Ovary (tissue), 10 donors: ENCODE measurements at regions of chr13 and their contacts with region 1.

Region 1: GRCh38 chr13:26985285-26985878 is 186.2 kb downstream of the USP12 start:
- DNase-seq: peak; percentile 41 to 82 (median 55)
- H3K4me3 ChIP-seq: no peak overlapping the region
- H3K27ac ChIP-seq: no peak overlapping the region
- H3K4me1 ChIP-seq: peaks cover 9% of the 10 kb centered on the region
- H3K27me3 ChIP-seq: no peaks in the 10 kb centered on the region
- CTCF ChIP-seq: peak; percentile 57 to 85 (median 71)
- EP300 ChIP-seq: no peak
- POLR2A ChIP-seq: no peak

Region 2: DNA sequence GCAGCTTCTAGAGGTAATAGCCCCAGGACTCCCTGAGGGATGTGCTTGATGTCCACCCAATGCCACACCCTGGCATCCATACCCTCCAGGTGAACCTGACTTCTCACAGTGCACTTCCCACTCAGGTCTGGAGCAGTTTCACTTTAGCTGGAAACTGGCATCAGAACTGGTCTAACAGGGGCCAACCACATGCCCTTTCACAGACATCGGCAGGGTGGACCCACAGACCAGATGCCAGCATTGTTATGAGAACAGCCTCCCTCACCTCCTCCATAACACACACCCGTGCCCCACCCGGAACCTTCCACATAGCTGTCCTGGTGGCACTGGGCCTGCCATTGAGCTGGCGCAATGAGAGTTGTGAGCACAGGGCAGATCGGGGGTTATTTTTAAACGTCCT is 147.4 kb before region 1 on chr13:
- intact Hi-C with region 1: no loop called
- DNase-seq: no peak
- H3K4me3 ChIP-seq: no peak overlapping the region
- H3K27ac ChIP-seq: no peak overlapping the region
- H3K4me1 ChIP-seq: no peaks in the 10 kb centered on the region
- H3K27me3 ChIP-seq: no peaks in the 10 kb centered on the region
- CTCF ChIP-seq: no peak
- EP300 ChIP-seq: no peak
- POLR2A ChIP-seq: no peak

Region 3: DNA sequence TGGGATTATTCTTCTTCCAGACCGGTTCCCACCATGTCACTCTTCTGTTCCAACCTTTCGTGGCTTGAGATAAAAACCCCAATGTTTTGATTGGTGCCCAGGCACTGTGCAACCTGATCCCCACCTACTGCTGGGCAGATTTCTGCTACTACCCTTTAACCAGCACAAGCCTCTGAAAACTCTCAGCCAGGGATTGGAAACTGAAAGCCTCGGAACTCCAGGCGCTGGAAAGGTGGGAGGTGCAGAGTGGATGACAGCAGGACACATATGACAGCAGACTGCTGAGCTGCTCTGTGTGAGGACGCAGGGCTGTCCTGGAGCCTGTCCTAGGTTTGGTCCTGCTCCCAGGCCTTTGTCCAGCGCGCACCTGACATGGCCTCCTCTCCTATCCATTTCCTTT is 370.5 kb after region 1 on chr13:
- intact Hi-C with region 1: loop called (anchors 2 to 5 kb)
- DNase-seq: no peak
- H3K4me3 ChIP-seq: no peak overlapping the region
- H3K27ac ChIP-seq: no peak overlapping the region
- H3K4me1 ChIP-seq: no peaks in the 10 kb centered on the region
- H3K27me3 ChIP-seq: no peaks in the 10 kb centered on the region
- CTCF ChIP-seq: no peak
- EP300 ChIP-seq: no peak
- POLR2A ChIP-seq: no peak